MCF 10A (cell line): ENCODE measurements at regions of chr12 and their contacts with region 1.

Region 1: DNA sequence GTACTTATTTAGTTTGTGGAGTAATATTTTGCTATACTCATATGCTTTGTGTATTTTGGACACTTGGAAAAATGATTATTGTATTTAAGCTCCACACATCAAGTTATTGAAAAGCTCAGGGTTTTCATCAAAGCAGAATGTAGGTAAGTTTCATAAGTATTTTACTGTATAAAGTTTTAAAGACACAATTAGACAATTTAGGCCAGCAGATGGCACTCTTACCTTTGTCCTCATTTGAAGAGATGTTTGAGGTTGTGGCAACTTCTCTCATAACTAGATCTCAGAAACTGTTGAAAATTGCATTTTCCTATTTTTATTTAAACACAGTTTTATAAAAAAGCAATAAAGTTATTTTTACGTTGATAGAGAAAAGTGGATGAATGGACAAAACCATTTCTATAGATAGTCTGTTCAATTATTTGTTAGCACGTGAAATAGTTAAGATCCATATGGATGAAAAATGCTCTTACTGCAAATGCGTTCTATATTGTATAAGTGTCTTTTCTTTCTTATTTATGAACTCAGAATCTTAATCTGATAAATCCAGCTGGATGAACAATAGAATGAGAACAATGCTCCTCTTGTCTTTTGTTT is 300.0 kb downstream of the AEBP2 start:
- DNase-seq: peak; percentile 75
- H3K4me3 Mint-ChIP-seq: no peak overlapping the region
- H3K27ac Mint-ChIP-seq: no peak overlapping the region
- H3K4me1 Mint-ChIP-seq: no peaks in the 10 kb centered on the region
- H3K27me3 Mint-ChIP-seq: peaks cover 22% of the 10 kb centered on the region
- CTCF ChIP-seq: peak; percentile 57

Region 2: GRCh38 chr12:19726122-19726521 is 13.2 kb before region 1 on chr12:
- CTCF ChIA-PET with region 1: interaction called, 36 read pairs
- POLR2A ChIA-PET with region 1: no interaction called
- intact Hi-C with region 1: no loop called
- DNase-seq: no peak
- H3K4me3 Mint-ChIP-seq: no peak overlapping the region
- H3K27ac Mint-ChIP-seq: no peak overlapping the region
- H3K4me1 Mint-ChIP-seq: no peaks in the 10 kb centered on the region
- H3K27me3 Mint-ChIP-seq: no peaks in the 10 kb centered on the region
- CTCF ChIP-seq: no peak

Region 3: GRCh38 chr12:19893514-19893913 is 154.2 kb after region 1 on chr12:
- CTCF ChIA-PET with region 1: interaction called, 26 read pairs
- POLR2A ChIA-PET with region 1: interaction called, 4 read pairs
- intact Hi-C with region 1: loop called (anchors 1 kb)
- DNase-seq: peak; percentile 38
- H3K4me3 Mint-ChIP-seq: no peak overlapping the region
- H3K27ac Mint-ChIP-seq: no peak overlapping the region
- H3K4me1 Mint-ChIP-seq: peaks cover 6% of the 10 kb centered on the region
- H3K27me3 Mint-ChIP-seq: peaks cover 57% of the 10 kb centered on the region
- CTCF ChIP-seq: peak; percentile 24

Region 4: DNA sequence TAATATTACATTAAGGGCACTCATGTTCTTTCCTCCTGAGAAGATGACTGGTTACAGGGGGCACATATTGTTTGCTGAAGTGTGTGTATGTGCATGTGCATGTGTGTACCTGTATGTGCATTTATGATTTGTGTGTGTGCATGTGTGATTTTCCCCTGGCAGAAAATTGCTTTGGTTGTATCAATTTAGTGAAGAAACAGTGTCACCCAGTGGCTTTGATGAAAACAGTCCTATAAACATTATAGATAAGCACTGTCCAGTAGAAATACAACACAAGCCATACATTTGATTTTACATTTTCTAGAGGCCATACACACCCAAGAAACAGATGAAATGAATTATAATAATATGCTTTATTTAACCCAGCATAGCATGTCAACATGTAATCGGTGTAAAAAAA is 637.7 kb after region 1 on chr12:
- CTCF ChIA-PET with region 1: interaction called, 3 read pairs
- POLR2A ChIA-PET with region 1: no interaction called
- intact Hi-C with region 1: loop called (anchors 5 kb)
- DNase-seq: peak; percentile 28
- H3K4me3 Mint-ChIP-seq: no peak overlapping the region
- H3K27ac Mint-ChIP-seq: no peak overlapping the region
- H3K4me1 Mint-ChIP-seq: no peaks in the 10 kb centered on the region
- H3K27me3 Mint-ChIP-seq: peaks cover 81% of the 10 kb centered on the region
- CTCF ChIP-seq: peak; percentile 27